ENCODE measurements at regions of chr5 and their contacts with region 1.

Region 1: DNA sequence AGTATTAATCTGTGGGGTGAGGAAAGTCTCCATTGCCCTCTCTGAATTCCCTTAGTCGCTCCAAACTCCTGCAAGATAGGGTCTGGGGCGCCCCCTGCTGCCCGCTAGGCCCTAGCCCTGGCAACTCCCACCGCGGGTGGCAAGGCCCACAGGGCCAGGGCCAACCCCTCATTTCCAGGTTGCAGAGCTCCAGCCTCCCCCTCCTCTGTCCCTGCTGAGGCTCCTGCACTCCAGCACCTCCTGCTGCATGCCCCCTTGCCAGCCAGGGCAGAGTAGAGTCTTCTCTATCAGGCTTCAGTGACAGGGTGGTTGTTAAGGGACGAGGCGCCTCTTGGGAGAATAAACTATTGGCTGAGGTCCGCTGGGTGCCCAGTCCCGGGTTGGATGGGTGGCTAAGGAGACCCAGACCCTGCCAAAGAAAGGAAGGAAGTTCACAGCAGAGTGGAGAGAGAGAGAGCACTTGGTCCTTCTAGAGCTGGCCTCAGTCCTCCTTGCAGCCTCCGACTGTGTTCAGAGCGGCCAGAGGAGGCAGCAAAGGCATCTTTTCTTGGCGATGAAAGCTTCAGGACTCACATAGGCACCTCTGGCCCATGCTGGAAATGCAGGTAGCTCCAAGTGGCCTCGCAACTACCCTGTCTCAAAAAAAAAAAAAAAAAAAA is 45.6 kb downstream of the SAR1B start:
- DNase-seq: peak; percentile 78
- ATAC-seq: peak; percentile 90
- H3K4me3 ChIP-seq: no peak overlapping the region
- H3K27ac ChIP-seq: no peak overlapping the region
- H3K4me1 ChIP-seq: peaks cover 13% of the 10 kb centered on the region
- H3K27me3 ChIP-seq: no peaks in the 10 kb centered on the region
- CTCF ChIP-seq: peak; percentile 86

Region 2: DNA sequence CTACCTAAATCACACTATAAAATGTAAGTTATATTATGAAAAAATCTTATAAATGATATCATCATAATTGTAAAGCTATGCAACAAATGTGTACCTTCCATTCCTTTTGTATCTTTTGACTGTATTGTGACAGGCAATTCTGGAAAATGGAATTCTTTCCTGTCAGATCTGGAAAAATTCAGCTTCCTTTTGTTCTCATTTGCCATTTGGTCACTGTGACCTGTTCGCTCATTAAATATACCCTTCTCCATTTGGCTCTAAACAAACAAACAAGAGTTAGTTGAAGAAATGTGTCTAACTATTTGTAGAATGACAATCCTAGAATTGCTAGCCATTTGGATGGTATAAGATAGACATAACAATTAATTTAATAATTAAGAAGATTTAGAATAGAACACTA is 282.7 kb before region 1 on chr5:
- CTCF ChIA-PET with region 1: interaction called, 4 read pairs
- POLR2A ChIA-PET with region 1: no interaction called
- intact Hi-C with region 1: loop called (anchors 1 kb)
- DNase-seq: no peak
- ATAC-seq: no peak
- H3K4me3 ChIP-seq: no peak overlapping the region
- H3K27ac ChIP-seq: no peak overlapping the region
- H3K4me1 ChIP-seq: no peaks in the 10 kb centered on the region
- H3K27me3 ChIP-seq: no peaks in the 10 kb centered on the region
- CTCF ChIP-seq: no peak

Region 3: DNA sequence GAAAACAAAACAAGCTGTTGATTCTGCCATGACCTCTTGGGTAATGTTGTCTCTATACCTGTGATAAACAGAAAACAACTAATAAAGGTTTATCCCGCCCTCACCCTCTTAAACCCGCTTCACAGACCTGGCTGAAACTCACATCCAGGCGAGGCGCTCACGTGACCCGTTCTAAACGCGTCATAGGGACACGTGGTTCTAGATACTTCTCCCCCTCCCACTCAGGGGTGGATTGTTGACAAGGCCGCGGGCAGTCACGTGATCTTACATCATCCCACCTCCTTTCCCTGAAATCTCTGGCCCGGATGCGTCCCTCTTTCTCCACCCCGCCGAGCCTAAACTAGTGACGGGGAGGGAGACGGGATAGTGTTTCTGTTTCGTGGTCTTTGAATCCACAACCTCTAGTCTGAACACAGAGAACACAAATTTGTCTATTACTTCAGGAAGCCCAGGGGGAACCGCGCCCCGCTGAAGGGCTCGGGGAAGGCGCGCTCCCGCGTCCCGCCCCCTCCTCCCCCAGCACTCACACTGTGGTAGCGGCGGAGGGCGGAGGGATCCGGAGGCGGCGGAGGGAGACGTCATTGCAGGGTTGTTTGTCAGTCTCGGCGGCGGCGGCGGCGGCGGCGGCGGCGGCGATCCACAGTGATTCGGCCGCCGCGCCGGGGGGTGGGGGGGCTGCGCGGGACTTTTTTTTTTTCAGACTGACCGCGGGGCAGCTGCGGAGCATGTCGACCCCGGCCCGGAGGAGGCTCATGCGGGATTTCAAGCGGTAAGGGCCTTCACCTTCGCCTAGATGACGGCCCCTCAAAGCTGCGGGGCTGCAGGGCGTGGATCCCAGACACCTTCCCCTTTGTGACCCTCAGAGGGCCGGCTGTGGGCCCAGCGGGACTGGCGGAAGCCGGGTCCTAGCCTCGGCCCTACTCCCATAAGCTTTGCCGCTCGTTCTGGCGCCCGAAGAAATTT is 215.8 kb before region 1 on chr5 and contains the start of gene UBE2B:
- CTCF ChIA-PET with region 1: no interaction called
- POLR2A ChIA-PET with region 1: no interaction called
- intact Hi-C with region 1: loop called (anchors 5 kb)
- DNase-seq: peak; percentile 94
- ATAC-seq: peak; percentile 64
- H3K4me3 ChIP-seq: peak within 1 kb of the TSS; percentile 99
- H3K27ac ChIP-seq: peak within 1 kb of the TSS; percentile 89
- H3K4me1 ChIP-seq: peaks cover 17% of the 10 kb centered on the region
- H3K27me3 ChIP-seq: no peaks in the 10 kb centered on the region
- CTCF ChIP-seq: no peak
- total RNA-seq, gene UBE2B: 9.5 and 10.0 TPM in 2 replicates

Region 4: GRCh38 chr5:134394932-134395331 is 192.1 kb before region 1 on chr5:
- CTCF ChIA-PET with region 1: interaction called, 3 read pairs
- POLR2A ChIA-PET with region 1: no interaction called
- intact Hi-C with region 1: loop called (anchors 5 kb)
- DNase-seq: no peak
- ATAC-seq: no peak
- H3K4me3 ChIP-seq: no peak overlapping the region
- H3K27ac ChIP-seq: no peak overlapping the region
- H3K4me1 ChIP-seq: peaks cover 35% of the 10 kb centered on the region
- H3K27me3 ChIP-seq: no peaks in the 10 kb centered on the region
- CTCF ChIP-seq: no peak